Activated naive CD4-positive, alpha-beta T cell treated with anti-CD3 and anti-CD28 coated beads, Interleukin-2, amount 10 ng/mL, durations not matched to agents 7 days and 5 days (primary cell): ENCODE measurements at regions of chr1 and their contacts with region 1.

Region 1: GRCh38 chr1:182301467-182302198 is 90.0 kb downstream of the GLUL start:
- DNase-seq: no peak
- H3K4me3 Mint-ChIP-seq: no peak overlapping the region
- H3K27ac Mint-ChIP-seq: no peak overlapping the region
- H3K4me1 Mint-ChIP-seq: peaks cover 18% of the 10 kb centered on the region
- H3K27me3 Mint-ChIP-seq: no peaks in the 10 kb centered on the region

Region 2: GRCh38 chr1:182198049-182198501 is 103.6 kb before region 1 on chr1:
- CTCF ChIA-PET with region 1: no interaction called
- DNase-seq: no peak
- H3K4me3 Mint-ChIP-seq: no peak overlapping the region
- H3K27ac Mint-ChIP-seq: no peak overlapping the region
- H3K4me1 Mint-ChIP-seq: no peaks in the 10 kb centered on the region
- H3K27me3 Mint-ChIP-seq: peaks cover 9% of the 10 kb centered on the region

Region 3: DNA sequence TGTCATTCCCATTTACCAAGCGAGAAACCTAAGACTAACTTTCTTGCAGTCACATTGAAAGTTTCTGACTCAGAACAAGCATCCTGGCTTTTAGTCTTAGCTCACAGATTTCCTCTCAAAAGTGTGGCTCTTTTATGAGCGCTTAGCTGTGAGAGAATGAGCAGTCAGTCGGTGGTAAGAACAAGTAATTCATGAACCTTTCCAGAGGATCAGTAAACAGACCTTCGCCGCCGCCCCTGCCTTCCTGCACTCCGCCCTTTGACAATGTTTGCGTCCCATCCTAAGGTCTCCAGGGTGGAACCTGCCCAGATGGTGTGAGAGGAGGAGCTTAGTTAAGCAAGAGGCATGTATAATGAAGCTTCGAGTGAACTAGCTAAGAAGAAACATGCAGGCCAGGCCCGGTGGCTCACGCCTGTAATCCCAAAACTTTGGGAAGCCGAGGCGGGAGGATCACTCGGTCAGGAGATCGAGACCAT is 52.4 kb before region 1 on chr1:
- CTCF ChIA-PET with region 1: interaction called, 10 read pairs
- DNase-seq: no peak
- H3K4me3 Mint-ChIP-seq: no peak overlapping the region
- H3K27ac Mint-ChIP-seq: no peak overlapping the region
- H3K4me1 Mint-ChIP-seq: peaks cover 14% of the 10 kb centered on the region
- H3K27me3 Mint-ChIP-seq: no peaks in the 10 kb centered on the region

Region 4: DNA sequence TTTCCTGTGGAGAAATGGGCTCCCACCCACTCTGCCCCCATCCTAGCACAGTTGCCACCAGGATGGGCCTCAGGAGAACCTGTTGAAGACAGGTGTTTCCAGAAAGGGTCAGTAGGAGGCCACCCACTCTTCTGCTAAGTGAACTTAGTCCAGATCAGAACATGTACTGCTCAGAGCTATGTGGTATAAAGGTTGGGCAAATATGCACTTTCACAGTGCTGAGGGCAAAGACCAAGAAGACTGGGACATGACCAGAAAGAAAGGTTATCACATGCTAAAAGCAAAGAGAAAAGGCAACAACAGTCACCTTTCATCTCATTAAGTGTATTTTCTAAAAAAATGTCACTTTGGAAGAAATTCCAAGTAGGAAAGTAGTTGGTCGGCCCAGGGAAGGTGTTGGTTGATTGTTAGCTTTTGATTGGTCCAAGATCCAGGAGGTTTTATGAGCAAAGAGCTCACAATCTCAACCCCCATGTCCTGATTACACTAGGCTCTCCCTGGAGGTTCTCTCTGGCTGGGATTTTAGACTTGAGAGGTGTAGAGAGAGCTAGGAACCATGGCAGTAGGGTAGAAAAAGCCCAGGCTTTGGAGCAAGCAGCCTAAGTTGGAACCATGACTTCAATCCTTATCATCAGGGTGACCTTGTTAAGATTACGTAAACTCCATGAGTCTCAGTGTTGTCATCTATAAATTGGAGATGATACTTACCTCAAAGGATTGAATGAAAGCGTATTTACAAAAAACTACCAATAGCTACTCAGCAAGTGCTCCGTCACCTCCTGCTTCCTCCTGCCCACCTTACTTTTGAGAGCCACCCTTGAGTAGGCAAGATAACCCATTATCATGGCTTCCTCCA is 12.7 kb before region 1 on chr1:
- CTCF ChIA-PET with region 1: no interaction called
- DNase-seq: no peak
- H3K4me3 Mint-ChIP-seq: no peak overlapping the region
- H3K27ac Mint-ChIP-seq: no peak overlapping the region
- H3K4me1 Mint-ChIP-seq: no peaks in the 10 kb centered on the region
- H3K27me3 Mint-ChIP-seq: no peaks in the 10 kb centered on the region

Region 5: GRCh38 chr1:182391362-182392044 is 89.9 kb after region 1 on chr1 and contains the start of gene GLUL:
- CTCF ChIA-PET with region 1: interaction called, 33 read pairs
- DNase-seq: peak; percentile 88
- H3K4me3 Mint-ChIP-seq: peak within 1 kb of the TSS; percentile 99
- H3K27ac Mint-ChIP-seq: peak within 1 kb of the TSS; percentile 97
- H3K4me1 Mint-ChIP-seq: peaks cover 52% of the 10 kb centered on the region
- H3K27me3 Mint-ChIP-seq: peaks cover 23% of the 10 kb centered on the region

Region 6: DNA sequence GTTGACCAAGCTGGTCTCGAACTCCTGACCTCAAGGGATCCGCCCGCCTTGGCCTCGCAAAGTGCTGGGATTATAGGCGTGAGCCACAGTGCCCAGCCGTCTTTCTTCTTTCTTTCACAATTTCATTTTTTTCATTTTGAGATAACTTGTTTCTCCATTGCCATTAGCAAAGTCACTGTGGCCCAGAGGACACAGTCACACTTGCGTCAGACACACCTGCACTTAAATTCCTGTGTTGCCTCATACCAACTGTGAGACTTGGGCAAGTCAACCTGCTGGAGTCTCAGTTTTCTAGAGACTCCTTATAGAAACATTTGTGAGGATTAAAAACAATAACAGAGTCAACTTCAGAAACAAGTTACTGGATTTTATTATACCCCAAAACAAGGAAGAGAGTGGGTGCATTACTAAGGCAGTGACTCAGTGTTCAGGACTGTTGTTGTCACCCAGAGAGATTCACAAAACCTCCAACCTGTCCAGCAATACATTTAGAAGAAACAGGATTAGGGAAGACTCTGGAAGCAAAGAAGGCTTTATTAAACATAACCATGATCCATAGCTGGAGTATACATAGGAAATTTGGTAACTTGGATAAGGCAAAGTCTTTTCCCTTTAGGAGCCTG is 96.2 kb after region 1 on chr1:
- CTCF ChIA-PET with region 1: interaction called, 33 read pairs
- DNase-seq: no peak
- H3K4me3 Mint-ChIP-seq: no peak overlapping the region
- H3K27ac Mint-ChIP-seq: no peak overlapping the region
- H3K4me1 Mint-ChIP-seq: peaks cover 18% of the 10 kb centered on the region
- H3K27me3 Mint-ChIP-seq: peaks cover 25% of the 10 kb centered on the region